Activated CD4-positive, alpha-beta T cell treated with anti-CD3 and anti-CD28 coated beads for 36 hours (primary cell): ENCODE measurements at regions of chr2 and their contacts with region 1.

Region 1: DNA sequence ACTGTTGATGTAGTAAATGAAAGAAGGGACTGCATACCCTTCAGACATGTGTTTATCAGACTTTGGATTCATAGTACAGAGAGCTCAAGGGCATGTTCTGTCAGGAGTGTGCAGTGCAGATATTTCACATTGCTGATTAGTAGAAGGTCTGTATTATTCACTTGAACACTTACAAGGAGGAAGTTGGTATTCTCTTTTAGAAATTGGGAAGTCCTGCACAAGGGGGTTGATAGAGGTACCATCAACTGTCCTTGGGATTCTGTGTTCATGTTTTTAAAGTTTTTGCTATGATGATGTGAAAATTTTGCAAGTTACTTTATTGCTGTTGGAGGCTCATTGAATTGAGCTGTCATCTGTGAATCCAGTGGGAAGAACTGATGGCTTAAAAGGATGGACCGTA is 6.7 kb downstream of the PSMD1 start:
- DNase-seq: no peak
- ATAC-seq: no peak
- H3K4me3 Mint-ChIP-seq: no peak overlapping the region
- H3K27ac Mint-ChIP-seq: no peak overlapping the region
- H3K4me1 Mint-ChIP-seq: peaks cover 32% of the 10 kb centered on the region
- H3K27me3 Mint-ChIP-seq: no peaks in the 10 kb centered on the region

Region 2: GRCh38 chr2:231043796-231044195 is 19.6 kb before region 1 on chr2:
- CTCF ChIA-PET with region 1: no interaction called
- POLR2A ChIA-PET with region 1: no interaction called
- intact Hi-C with region 1: no loop called
- DNase-seq: no peak
- ATAC-seq: no peak
- H3K4me3 Mint-ChIP-seq: no peak overlapping the region
- H3K27ac Mint-ChIP-seq: no peak overlapping the region
- H3K4me1 Mint-ChIP-seq: no peaks in the 10 kb centered on the region
- H3K27me3 Mint-ChIP-seq: peaks cover 24% of the 10 kb centered on the region

Region 3: DNA sequence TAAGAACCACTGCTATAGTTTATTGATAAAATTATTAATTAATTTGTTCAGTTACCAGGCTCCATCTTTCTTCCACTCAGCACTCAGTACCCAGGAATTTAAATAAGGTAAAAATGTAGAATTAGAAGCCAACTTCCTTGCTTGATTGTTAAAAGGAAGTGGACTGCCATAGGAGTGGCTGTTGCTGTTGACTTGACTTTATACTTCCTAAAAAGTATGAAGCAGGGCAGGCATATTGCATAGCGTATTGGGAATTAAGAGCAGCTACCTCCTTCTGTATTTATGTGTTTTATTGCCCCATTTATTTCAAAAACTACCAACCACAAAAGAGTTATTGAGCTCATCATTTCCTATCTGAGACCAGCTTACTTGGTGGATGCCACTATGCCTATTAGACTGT is 21.2 kb after region 1 on chr2:
- CTCF ChIA-PET with region 1: interaction called, 3 read pairs
- POLR2A ChIA-PET with region 1: no interaction called
- intact Hi-C with region 1: loop called in 1 of 2 experiments (anchors 2 kb)
- DNase-seq: no peak
- ATAC-seq: no peak
- H3K4me3 Mint-ChIP-seq: no peak overlapping the region
- H3K27ac Mint-ChIP-seq: no peak overlapping the region
- H3K4me1 Mint-ChIP-seq: no peaks in the 10 kb centered on the region
- H3K27me3 Mint-ChIP-seq: no peaks in the 10 kb centered on the region